ENCODE measurements at regions of chr3 and their contacts with region 1.

Region 1: DNA sequence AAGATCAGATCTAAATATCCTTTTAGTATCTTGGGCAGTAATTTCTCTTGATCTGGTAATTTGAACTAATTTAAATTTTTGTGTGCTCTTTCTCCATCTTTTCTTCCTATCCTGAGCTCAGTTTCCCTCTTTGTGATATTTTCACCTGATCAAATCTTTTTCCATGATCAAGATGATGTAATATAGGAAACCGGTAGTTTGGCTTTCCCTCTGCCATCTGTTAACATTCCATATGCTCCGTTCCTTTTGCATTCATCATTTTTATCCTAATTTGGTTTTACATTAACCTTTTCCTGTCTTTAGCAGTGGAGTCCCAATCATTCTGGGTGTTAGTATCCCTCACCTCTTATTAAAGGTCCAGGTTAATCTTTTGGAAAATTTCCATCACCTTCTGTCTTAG is 5.9 kb upstream of the ABHD6 start:
- DNase-seq: no peak
- CTCF ChIP-seq: no peak

Region 2: DNA sequence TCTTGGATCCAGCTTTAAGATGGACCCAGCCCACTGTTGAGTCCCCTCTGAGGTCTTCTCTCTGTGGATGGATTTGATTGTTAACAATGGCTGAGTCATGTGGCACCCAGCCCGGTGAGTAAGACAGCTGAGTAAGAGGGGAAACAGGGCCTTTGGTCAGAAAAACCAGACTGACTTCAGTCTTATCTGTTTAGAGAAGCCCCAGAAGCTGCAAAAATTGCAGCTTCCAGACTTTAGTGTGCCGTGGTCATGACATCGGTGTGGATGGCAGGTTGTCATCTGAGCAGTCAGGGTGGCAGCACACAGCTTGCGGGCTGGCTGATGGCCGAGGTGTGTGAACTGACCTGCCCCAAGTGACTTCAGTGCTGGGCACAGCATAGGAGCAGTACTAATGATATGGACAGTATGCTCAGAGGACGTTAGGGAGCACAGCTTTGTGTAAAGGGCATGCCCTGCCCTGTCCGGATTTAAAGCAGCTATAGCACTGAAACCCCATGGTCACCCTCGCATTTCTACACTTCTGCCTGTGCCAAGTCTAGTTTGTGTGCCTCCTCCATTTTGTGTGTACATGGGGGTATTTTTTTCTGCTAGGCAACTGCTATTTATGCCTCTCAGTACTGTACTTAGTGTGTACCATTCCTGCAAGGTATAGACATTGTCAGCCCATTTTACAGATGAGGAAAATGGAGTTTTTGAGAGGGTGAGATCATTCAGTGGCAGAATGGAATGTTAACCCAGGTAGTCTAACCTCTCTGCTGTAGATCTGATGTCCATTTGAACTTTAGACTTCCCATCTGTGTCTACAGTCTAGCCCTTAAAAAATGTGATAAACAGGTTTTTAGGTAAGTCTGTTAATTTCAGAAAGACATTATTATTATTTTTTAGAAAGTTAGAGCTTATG is 179.0 kb before region 1 on chr3:
- CTCF ChIA-PET with region 1: no interaction called
- POLR2A ChIA-PET with region 1: no interaction called
- DNase-seq: no peak
- CTCF ChIP-seq: no peak

Region 3: DNA sequence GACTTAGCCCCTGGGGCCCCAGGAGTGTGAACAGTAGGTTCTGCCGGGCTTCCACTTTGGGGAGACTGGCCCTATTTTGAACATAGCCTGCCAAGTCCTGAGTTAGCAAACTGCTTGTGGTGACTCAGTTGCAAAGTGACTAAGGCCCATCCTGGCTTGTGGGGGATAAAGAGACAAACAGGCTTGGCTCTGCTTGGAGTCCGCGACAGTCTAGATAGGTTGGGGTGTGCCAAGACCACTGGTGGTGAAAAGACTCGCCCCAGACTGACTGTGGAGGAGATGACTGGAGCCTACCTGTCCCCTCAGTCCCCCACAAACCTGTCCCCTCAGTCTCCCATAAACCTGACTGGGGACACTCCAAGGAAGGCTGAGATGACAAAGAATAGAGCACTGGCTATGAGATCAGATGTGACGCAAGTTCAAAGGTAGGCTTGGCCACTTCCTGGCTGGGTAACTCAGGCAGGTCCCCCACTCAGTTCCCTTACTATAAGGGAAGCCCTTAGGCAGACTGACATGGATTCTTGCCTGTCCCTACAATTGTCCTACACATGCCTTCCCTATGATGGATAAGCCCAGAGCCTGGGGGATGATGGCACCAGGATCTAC is 25.2 kb before region 1 on chr3:
- CTCF ChIA-PET with region 1: interaction called, 188 read pairs
- POLR2A ChIA-PET with region 1: no interaction called
- DNase-seq: no peak
- CTCF ChIP-seq: no peak